Activated CD4-positive, alpha-beta T cell treated with anti-CD3 and anti-CD28 coated beads for 36 hours (primary cell): ENCODE measurements at regions of chr3 and their contacts with region 1.

Region 1: GRCh38 chr3:112111785-112112402 is 21.2 kb downstream of the GCSAM start:
- DNase-seq: peak; percentile 73
- ATAC-seq: peak; percentile 94
- H3K4me3 Mint-ChIP-seq: no peak overlapping the region
- H3K27ac Mint-ChIP-seq: no peak overlapping the region
- H3K4me1 Mint-ChIP-seq: peaks cover 12% of the 10 kb centered on the region
- H3K27me3 Mint-ChIP-seq: no peaks in the 10 kb centered on the region

Region 2: GRCh38 chr3:112128843-112129727 is 17.2 kb after region 1 on chr3:
- CTCF ChIA-PET with region 1: interaction called, 36 read pairs
- POLR2A ChIA-PET with region 1: no interaction called
- intact Hi-C with region 1: no loop called
- DNase-seq: peak; percentile 75
- ATAC-seq: peak; percentile 82
- H3K4me3 Mint-ChIP-seq: peak overlapping the region; percentile 20
- H3K27ac Mint-ChIP-seq: peak overlapping the region; percentile 69
- H3K4me1 Mint-ChIP-seq: peaks cover 82% of the 10 kb centered on the region
- H3K27me3 Mint-ChIP-seq: no peaks in the 10 kb centered on the region

Region 3: GRCh38 chr3:112293368-112294321 is 181.8 kb after region 1 on chr3 and contains the start of gene SLC9C1:
- CTCF ChIA-PET with region 1: interaction called, 22 read pairs
- POLR2A ChIA-PET with region 1: no interaction called
- intact Hi-C with region 1: loop called (anchors 5 kb)
- DNase-seq: peak; percentile 52
- ATAC-seq: peak; percentile 81
- H3K4me3 Mint-ChIP-seq: peak within 1 kb of the TSS; percentile 53
- H3K27ac Mint-ChIP-seq: peak within 1 kb of the TSS; percentile 38
- H3K4me1 Mint-ChIP-seq: peaks cover 21% of the 10 kb centered on the region
- H3K27me3 Mint-ChIP-seq: no peaks in the 10 kb centered on the region
- total RNA-seq, gene SLC9C1: not detected

Region 4: DNA sequence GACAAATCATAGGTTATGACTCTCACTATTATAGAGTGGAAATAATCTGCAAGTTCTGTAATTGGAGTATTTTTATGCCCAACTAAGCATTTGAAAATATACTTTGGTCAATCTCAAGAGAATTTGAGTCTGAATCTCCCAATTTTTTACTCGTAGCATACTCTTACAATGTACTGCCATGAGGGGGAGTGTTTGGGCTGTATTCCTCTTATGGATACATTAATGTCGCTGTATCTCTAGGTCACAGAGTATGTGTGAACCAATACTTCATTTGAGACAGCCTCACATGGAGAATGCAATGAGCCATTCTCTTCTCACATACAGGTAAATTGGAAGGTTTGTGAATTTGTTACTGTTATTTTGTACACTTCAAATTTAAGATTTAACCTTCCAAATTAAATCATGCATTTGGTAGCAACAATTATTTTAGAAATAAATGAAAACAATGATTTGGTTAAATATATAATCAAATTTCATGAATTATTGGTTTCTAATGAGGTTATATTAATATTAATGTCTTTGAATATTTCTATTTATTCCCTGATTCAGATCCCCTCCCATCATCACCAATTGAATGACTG is 215.6 kb after region 1 on chr3:
- CTCF ChIA-PET with region 1: interaction called, 8 read pairs
- POLR2A ChIA-PET with region 1: no interaction called
- intact Hi-C with region 1: loop called in 1 of 2 experiments (anchors 5 kb)
- DNase-seq: peak; percentile 54
- ATAC-seq: peak; percentile 100
- H3K4me3 Mint-ChIP-seq: no peak overlapping the region
- H3K27ac Mint-ChIP-seq: no peak overlapping the region
- H3K4me1 Mint-ChIP-seq: peaks cover 4% of the 10 kb centered on the region
- H3K27me3 Mint-ChIP-seq: peaks cover 7% of the 10 kb centered on the region

Region 5: DNA sequence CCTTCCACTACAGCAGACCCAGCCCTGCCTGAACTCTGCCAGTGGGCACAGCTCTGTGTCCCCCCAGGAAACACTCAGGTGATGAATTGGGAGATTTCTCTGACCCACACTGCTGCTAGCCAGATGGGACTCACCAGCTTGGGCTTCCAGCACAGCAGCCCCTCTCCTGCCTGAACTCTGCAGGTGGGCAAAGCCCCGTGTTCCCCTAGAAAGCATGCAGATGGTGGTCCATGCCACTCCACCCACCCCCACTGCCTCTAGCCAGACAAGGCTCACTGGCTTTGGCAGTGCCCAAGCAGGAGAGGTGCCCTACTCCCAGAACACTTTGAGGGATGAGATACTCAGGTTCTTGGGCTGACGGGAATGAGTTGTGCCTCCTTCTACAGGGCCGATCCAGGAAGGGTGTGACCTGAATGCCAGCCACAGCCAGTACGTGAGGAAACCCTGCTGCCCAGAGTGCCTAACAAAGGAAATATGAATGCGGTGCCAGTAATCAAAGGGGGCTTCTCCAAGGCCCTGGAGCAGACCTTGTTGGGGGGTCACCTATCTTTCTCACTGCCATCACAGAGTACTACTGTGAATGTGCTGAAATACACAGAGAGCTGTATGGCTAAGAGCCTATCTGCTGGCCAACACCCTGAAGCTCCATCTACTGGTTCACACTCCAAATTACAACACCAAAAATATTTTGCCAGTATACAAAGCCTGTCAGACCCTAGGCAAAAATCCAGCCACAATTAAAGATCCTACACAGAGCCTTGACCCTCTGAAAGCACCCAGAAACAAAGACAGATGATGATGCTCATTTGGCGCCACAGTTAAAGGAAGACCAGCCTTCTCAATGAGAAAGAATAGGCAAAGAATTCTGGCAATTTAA is 325.5 kb after region 1 on chr3:
- CTCF ChIA-PET with region 1: interaction called, 4 read pairs
- POLR2A ChIA-PET with region 1: no interaction called
- intact Hi-C with region 1: loop called in 1 of 2 experiments (anchors 5 kb)
- DNase-seq: peak; percentile 22
- ATAC-seq: peak; percentile 92
- H3K4me3 Mint-ChIP-seq: no peak overlapping the region
- H3K27ac Mint-ChIP-seq: peak overlapping the region; percentile 64
- H3K4me1 Mint-ChIP-seq: peaks cover 39% of the 10 kb centered on the region
- H3K27me3 Mint-ChIP-seq: no peaks in the 10 kb centered on the region

Region 6: DNA sequence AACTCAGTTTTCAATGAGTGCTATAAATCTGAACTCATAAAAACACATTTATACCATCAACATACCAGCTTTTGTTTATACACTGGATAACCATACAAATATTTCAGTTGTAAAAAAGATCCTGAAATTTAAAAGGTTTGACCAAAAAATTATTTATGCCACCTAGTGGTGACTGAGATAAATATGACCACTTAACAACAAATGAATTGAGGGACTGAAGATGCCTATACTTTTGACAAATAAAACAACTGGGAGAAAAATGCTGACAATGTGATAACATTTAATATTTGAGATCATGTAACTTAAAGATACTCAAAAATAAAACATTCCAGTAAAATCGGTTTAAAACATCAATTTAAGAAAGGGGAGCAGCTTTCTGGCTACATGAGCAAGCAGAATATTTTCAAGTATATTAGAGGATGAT is 419.5 kb after region 1 on chr3:
- CTCF ChIA-PET with region 1: interaction called, 6 read pairs
- POLR2A ChIA-PET with region 1: no interaction called
- intact Hi-C with region 1: loop called (anchors 2 to 5 kb)
- DNase-seq: no peak
- ATAC-seq: no peak
- H3K4me3 Mint-ChIP-seq: no peak overlapping the region
- H3K27ac Mint-ChIP-seq: no peak overlapping the region
- H3K4me1 Mint-ChIP-seq: peaks cover 10% of the 10 kb centered on the region
- H3K27me3 Mint-ChIP-seq: no peaks in the 10 kb centered on the region

Region 7: GRCh38 chr3:112734718-112735350 is 622.9 kb after region 1 on chr3:
- CTCF ChIA-PET with region 1: no interaction called
- POLR2A ChIA-PET with region 1: no interaction called
- intact Hi-C with region 1: no loop called
- DNase-seq: peak; percentile 78
- ATAC-seq: peak; percentile 57
- H3K4me3 Mint-ChIP-seq: no peak overlapping the region
- H3K27ac Mint-ChIP-seq: no peak overlapping the region
- H3K4me1 Mint-ChIP-seq: peaks cover 48% of the 10 kb centered on the region
- H3K27me3 Mint-ChIP-seq: no peaks in the 10 kb centered on the region